GM23248 (cell line): ENCODE measurements at regions of chr19 and their contacts with region 1.

Region 1: GRCh38 chr19:3304871-3305423 is 61.4 kb upstream of the NFIC start:
- DNase-seq: peak; percentile 75
- H3K4me3 ChIP-seq: no peak overlapping the region
- H3K27ac ChIP-seq: no peak overlapping the region
- H3K4me1 ChIP-seq: no peaks in the 10 kb centered on the region
- H3K27me3 ChIP-seq: peaks cover 7% of the 10 kb centered on the region

Region 2: DNA sequence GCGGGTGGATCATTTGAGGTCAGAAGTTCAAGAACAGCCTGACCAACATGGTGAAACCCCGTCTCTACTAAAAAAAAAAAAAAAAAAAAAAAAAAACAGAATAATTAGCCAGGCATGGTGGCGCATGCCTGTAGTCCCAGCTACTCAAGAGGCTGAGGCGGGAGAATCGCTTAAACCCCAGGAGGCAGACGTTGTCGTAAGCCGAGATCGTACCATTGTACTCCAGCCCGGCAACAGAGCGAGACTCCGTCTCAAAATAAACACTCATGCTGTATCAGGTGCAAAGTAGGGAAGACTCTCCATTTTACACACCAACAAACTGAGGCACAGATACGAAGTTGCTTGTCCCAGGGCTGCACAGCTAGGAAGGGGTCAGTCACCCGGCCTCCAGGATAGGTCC is 312.0 kb before region 1 on chr19:
- in situ Hi-C with region 1: no loop called
- DNase-seq: no peak
- H3K4me3 ChIP-seq: no peak overlapping the region
- H3K27ac ChIP-seq: no peak overlapping the region
- H3K4me1 ChIP-seq: no peaks in the 10 kb centered on the region
- H3K27me3 ChIP-seq: no peaks in the 10 kb centered on the region

Region 3: DNA sequence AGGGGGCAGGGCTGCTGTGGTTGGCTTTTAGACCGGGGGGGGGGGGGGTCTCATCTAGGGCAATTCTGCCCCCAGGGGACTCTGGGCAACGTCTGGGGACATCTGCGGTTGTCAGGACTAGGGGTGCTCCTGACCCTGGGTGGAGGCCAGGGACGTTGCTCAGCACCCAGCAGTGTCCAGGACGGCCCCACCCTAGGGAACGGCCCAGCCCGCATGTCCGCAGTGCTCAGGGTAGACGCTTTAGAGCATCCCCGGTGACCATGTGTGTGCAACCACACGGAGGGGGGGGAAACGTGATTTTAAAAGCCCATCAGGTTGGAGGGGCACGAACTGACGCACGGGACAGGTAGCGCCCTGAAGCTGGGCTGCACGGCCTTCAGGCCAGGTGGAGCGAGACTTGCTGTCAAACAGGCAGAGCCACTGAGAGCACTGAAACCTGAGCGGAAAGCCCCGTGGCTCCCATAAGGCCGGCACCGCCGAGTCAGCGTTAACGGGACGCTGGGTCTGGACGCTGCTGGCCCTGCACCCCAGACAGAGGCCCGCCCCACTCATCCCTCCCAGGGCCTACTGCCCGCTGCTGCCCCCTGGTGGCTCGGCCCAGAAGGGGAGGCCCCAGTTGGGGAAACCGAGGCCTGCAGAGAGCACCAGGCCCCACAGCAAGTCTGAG is 313.3 kb after region 1 on chr19:
- in situ Hi-C with region 1: loop called (anchors 25 kb)
- DNase-seq: peak; percentile 82
- H3K4me3 ChIP-seq: no peak overlapping the region
- H3K27ac ChIP-seq: no peak overlapping the region
- H3K4me1 ChIP-seq: no peaks in the 10 kb centered on the region
- H3K27me3 ChIP-seq: no peaks in the 10 kb centered on the region